Head of caudate nucleus (tissue), 42 donors: ENCODE measurements at regions of chr9 and their contacts with region 1.

Region 1: DNA sequence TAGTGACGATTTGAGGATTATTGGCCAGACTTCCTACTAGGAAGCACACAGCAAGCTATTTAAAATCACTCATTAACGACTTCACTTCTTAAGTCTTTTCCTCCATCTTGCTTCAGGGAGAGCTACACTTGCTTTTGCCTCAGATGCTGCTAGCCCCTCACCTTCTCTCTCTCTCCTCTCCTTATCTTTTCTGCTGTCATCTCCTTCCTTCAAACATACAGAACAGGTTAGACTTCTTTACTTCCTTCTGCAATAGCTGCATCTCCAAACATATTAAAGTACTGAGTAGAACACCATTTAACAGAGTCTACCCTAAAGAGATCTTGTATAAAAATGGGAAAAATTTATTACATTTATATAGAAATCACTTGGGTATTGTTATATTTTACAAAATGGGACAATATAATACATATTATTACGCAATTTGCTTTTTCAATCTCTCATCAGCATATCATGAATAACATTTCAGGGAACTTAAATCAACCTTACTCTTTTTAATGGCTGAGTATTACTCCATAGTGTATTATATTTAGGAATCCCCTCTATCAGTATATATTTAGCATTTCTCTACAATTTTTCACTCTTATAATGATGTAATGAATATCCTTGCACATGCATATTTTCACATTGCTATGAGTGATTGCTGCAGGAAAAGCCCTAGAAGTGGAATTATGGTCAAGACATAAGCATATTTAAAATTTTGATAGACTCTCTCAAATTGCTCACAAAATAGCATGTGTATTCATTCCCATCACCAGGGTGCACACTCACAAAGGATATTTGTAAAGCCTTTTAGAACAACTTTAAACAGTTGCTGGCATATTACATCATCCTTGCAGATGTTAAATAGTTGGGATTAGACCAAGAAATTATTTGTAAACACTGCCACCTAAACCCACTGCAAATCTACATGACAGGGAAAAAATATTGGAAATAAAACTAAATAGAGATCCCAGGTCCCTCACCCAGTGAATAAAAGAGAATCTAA is 164.5 kb upstream of the NFIB start:
- DNase-seq: no peak

Region 2: GRCh38 chr9:14768405-14769229 is 290.1 kb after region 1 on chr9:
- intact Hi-C with region 1: loop called (anchors 10 kb)
- DNase-seq: peak in 19 of 42 donors; percentile 11 to 67 (median 37)